Prostate gland (tissue), 2 donors: ENCODE measurements at regions of chr5 and their contacts with region 1.

Region 1: DNA sequence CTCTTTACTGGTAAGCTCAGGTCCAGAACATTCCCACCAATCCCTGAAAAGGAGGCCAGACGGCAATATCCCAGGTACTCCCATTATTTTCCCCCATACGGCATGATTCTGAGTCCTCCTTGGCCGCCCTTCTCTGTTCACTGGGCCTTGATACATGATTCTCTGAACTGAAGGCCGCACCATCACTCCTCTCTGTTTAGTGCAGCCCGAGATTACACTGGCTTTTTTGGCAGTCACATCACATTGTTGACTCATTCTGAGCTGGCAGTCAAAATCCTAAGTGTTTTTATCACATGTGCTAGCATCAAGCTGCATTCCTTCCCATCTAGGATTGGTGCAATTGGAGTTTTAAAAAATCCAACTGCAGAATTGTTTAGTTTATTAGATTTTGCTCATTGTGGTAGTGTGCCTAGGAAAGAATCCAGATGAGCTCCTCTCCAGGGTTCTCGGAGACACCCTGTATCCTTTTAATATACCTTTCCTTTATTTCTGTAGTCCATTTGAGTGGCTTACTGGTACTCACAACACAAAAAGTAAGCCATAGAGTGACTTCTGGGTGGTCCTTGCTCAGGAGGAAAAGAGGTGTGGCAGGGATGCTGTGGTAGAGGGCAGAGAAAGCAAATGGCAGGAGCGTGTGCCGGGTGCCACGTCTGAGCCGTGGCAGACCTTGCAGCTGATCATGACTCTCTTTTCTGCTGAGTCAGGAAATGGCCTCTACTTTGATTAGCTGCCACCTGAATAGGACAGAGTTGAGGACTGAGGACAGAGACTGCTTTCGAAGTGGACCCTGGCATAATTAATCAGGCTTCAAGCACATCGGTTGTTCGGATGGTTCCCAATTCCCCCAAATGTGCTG is 121.1 kb upstream of the IL12B start:
- DNase-seq: no peak
- H3K4me3 ChIP-seq: no peak overlapping the region
- H3K27ac ChIP-seq: no peak overlapping the region
- H3K4me1 ChIP-seq: no peaks in the 10 kb centered on the region
- H3K27me3 ChIP-seq: peaks cover 2% of the 10 kb centered on the region
- CTCF ChIP-seq: no peak
- POLR2A ChIP-seq: no peak

Region 2: DNA sequence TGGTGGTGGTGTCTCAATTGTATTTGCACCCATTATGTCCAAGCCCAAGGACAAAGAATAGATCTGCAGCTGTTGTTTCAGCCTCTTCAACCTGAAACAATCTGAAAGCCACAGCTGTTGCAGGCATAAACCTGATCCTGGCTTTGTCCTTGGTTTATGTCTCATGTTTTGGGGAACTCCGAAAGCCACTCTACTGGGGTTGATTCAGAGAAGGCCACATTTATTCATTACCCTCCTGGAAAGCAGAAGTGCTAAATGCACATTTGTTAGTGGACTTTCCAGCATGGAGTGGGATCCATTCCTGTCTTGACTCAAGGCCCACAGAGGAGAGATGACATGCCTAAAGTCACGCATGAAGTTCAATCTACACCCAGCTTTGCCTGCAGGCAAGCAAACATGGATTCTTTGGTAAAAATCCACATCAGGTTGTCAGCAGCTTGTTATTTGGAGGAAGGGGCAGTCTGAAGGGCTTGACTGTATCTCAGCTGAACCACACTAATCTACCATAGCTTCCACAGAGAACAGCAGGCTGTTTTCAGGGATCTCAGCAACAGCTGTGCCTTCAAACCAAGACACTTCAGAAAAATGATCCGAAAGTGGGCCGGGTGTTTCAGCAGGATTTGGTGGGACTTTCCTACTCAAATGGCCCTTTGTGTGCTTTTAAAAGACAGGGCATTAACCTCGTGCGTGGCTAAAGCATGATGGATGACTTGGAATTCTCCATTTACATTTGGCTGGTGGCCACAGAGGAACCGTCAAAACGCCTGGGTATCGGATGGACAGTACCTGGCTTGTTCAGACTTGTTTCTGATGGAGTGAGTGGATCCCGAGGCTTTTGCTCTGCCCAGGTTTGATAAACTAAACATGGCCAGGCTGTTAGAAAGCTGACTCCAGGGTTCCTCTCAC is 1839.6 kb before region 1 on chr5:
- intact Hi-C with region 1: no loop called
- DNase-seq: no peak
- H3K4me3 ChIP-seq: no peak overlapping the region
- H3K27ac ChIP-seq: no peak overlapping the region
- H3K4me1 ChIP-seq: no peaks in the 10 kb centered on the region
- H3K27me3 ChIP-seq: no peaks in the 10 kb centered on the region
- CTCF ChIP-seq: no peak
- POLR2A ChIP-seq: no peak

Region 3: DNA sequence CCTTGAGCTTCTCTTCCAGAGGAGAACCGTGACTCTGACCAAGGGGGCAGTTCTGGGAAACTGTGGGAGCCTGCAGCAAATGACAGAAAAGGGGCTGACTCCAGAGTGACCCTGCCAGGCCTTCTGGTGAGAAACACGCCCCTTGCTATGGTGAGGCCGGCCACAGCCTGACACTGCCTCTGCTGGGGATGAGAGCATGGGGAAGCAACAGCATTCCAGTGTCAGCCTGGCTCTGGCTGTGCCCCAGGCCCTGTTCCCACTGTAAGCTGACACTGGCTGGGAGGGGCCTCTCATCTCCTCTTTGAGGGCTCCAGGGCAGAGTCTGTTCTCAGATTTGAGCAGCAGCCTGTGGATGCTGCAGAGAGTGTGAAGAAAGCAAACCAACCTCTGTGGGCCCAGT is 58.9 kb after region 1 on chr5:
- intact Hi-C with region 1: loop called (anchors 2 kb)
- DNase-seq: peak; percentile 79
- H3K4me3 ChIP-seq: no peak overlapping the region
- H3K27ac ChIP-seq: peak overlapping the region; percentile 47 to 73
- H3K4me1 ChIP-seq: peaks cover 17% of the 10 kb centered on the region
- H3K27me3 ChIP-seq: no peaks in the 10 kb centered on the region
- CTCF ChIP-seq: no peak
- POLR2A ChIP-seq: no peak

Region 4: GRCh38 chr5:159515909-159516415 is 64.5 kb after region 1 on chr5:
- intact Hi-C with region 1: loop called (anchors 2 kb)
- DNase-seq: peak; percentile 24
- H3K4me3 ChIP-seq: no peak overlapping the region
- H3K27ac ChIP-seq: no peak overlapping the region
- H3K4me1 ChIP-seq: peaks cover 21% of the 10 kb centered on the region
- H3K27me3 ChIP-seq: no peaks in the 10 kb centered on the region
- CTCF ChIP-seq: peak; percentile 18 to 76 (median 50)
- POLR2A ChIP-seq: no peak

Region 5: GRCh38 chr5:159752622-159753275 is 301.3 kb after region 1 on chr5:
- intact Hi-C with region 1: no loop called
- DNase-seq: no peak
- H3K4me3 ChIP-seq: no peak overlapping the region
- H3K27ac ChIP-seq: no peak overlapping the region
- H3K4me1 ChIP-seq: no peaks in the 10 kb centered on the region
- H3K27me3 ChIP-seq: no peaks in the 10 kb centered on the region
- CTCF ChIP-seq: no peak
- POLR2A ChIP-seq: no peak

Region 6: DNA sequence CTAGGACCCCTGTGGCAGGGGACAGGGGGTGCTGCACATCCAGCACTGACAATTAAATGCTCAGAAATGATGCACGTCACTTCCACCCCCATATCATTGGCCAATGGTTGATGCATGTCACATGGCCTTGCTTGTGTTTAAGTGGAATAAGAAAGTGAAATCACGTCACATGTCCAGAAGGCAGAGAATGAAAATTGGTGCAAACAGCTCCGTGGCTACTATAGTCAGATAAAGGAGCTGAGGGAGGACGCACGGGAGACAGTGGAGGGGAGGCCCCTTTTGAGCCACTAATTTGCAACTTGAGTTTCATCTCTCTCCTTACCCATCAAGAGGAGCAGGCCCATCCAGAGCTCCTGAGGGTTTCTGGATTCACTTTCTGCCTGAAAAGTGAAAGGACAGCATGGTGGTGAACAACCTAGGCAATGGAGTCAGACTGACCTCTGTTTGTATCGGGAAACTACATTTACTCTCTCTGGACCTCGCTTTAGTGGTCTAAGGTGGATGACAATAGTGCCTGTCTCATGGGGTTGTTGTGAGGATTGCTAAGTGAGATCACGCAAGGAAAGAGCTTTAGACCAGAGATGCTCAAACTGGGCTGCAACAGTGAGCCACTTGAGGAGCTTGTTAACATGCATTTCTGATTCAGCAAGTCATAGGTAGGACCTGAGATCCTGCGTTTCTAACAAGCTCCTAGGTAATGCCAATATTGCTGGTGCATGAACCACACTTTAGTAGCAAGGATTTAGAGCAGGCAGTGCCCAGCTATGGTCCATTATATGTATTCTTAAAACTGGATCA is 331.0 kb after region 1 on chr5:
- intact Hi-C with region 1: loop called (anchors 5 kb)
- DNase-seq: no peak
- H3K4me3 ChIP-seq: no peak overlapping the region
- H3K27ac ChIP-seq: no peak overlapping the region
- H3K4me1 ChIP-seq: no peaks in the 10 kb centered on the region
- H3K27me3 ChIP-seq: no peaks in the 10 kb centered on the region
- CTCF ChIP-seq: no peak
- POLR2A ChIP-seq: no peak